ENCODE measurements at regions of chr4 and their contacts with region 1.

Region 1: GRCh38 chr4:156294577-156294976 is 340.9 kb upstream of the CTSO start:
- DNase-seq: no peak
- H3K4me3 ChIP-seq: no peak overlapping the region
- H3K27ac ChIP-seq: peak overlapping the region in 2 of 4 donors; percentile 0 to 10
- H3K4me1 ChIP-seq: peaks cover 0 to 36% (median 22%) of the 10 kb centered on the region in 4 donors
- H3K27me3 ChIP-seq: no peaks in the 10 kb centered on the region
- CTCF ChIP-seq: no peak
- EP300 ChIP-seq: no peak
- POLR2A ChIP-seq: no peak

Region 2: DNA sequence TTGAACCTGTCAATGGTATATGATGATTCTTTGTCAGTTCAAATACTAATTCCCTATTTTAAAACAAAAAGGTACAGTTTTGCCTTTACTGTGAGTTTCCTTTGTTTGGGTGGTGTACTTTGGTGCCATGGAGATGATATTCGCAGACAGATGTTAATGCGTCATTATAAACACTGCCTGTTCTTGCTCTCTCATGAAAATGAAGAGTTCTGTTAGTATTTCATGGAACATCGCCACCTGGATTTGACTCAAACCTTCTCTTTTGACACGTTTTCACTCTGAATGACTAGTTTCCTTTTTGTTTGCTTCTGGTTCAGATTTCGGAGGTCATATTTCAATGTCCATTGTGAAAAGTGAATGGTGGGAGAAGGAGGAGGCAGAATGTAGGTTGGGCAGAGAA is 334.1 kb before region 1 on chr4:
- intact Hi-C with region 1: loop called (anchors 10 kb)
- DNase-seq: no peak
- H3K4me3 ChIP-seq: no peak overlapping the region
- H3K27ac ChIP-seq: peak overlapping the region; percentile 23 to 74 (median 52)
- H3K4me1 ChIP-seq: peaks cover 0 to 19% (median 16%) of the 10 kb centered on the region in 4 donors
- H3K27me3 ChIP-seq: no peaks in the 10 kb centered on the region
- CTCF ChIP-seq: no peak
- EP300 ChIP-seq: peak in 3 of 4 donors; percentile 13 to 76 (median 27)
- POLR2A ChIP-seq: no peak

Region 3: DNA sequence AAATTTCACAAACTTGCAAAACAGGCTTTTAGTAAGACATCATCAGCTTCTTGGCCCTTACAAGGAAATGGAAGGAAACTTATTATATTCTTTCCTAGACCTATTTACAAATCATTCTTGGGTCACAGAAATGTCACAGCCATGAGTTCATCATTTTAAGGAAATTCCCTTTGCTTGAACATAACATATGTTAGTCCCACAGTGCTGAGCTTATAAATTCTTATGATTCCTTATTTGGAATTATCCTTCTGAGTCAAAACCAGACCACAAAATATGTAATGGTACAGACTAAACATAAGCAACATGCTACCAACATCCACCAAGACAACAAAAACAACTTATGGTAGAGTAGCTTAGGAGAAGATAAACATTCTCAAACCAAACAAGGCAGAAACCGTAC is 104.0 kb before region 1 on chr4:
- intact Hi-C with region 1: loop called (anchors 5 kb)
- DNase-seq: no peak
- H3K4me3 ChIP-seq: no peak overlapping the region
- H3K27ac ChIP-seq: no peak overlapping the region
- H3K4me1 ChIP-seq: peaks cover 0 to 18% (median 3%) of the 10 kb centered on the region in 4 donors
- H3K27me3 ChIP-seq: no peaks in the 10 kb centered on the region
- CTCF ChIP-seq: no peak
- EP300 ChIP-seq: no peak
- POLR2A ChIP-seq: no peak

Measured in sigmoid colon (tissue), 7 donors.